ENCODE measurements at regions of chr3 and their contacts with region 1.

Region 1: GRCh38 chr3:31377045-31377642 is 155.6 kb upstream of the STT3B start:
- DNase-seq: peak; percentile 80 to 85
- H3K4me3 ChIP-seq: no peak overlapping the region
- H3K4me3 Mint-ChIP-seq: peak overlapping the region; percentile 26
- H3K27ac Mint-ChIP-seq: peak overlapping the region; percentile 95
- H3K4me1 ChIP-seq: peaks cover 36% of the 10 kb centered on the region
- H3K4me1 Mint-ChIP-seq: peaks cover 44% of the 10 kb centered on the region
- H3K27me3 ChIP-seq: no peaks in the 10 kb centered on the region
- H3K27me3 Mint-ChIP-seq: no peaks in the 10 kb centered on the region
- CTCF ChIP-seq: no peak

Region 2: DNA sequence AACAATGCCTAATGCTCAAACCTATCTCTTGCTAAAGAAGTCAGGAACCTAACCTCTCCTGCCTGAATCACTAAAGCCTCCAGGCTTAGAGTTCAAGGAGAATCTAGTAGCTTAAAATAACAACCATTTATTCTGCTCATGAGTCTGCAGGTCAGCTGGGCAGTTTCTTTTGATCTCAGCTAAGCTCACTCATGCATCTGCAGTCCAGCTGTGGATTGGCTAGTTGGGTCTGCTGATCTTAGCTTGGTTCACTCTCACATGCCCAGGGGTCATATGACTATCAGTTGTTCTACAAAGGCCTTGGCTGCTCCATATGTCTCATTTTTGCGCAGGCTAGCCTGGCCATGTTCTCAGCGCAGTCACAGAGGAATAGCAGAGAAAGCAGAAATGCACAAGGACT is 46.3 kb after region 1 on chr3:
- CTCF ChIA-PET with region 1: no interaction called
- POLR2A ChIA-PET with region 1: no interaction called
- intact Hi-C with region 1: loop called (anchors 5 kb)
- DNase-seq: peak; percentile 21 to 51
- H3K4me3 ChIP-seq: no peak overlapping the region
- H3K4me3 Mint-ChIP-seq: no peak overlapping the region
- H3K27ac Mint-ChIP-seq: no peak overlapping the region
- H3K4me1 ChIP-seq: peaks cover 7% of the 10 kb centered on the region; the same call in 1 of the 2 replicates
- H3K4me1 Mint-ChIP-seq: peaks cover 18% of the 10 kb centered on the region
- H3K27me3 ChIP-seq: no peaks in the 10 kb centered on the region
- H3K27me3 Mint-ChIP-seq: no peaks in the 10 kb centered on the region
- CTCF ChIP-seq: no peak

Measured in Caco-2 (cell line).